Activated CD4-positive, alpha-beta T cell treated with anti-CD3 and anti-CD28 coated beads for 36 hours (primary cell): ENCODE measurements at regions of chr1 and their contacts with region 1.

Region 1: DNA sequence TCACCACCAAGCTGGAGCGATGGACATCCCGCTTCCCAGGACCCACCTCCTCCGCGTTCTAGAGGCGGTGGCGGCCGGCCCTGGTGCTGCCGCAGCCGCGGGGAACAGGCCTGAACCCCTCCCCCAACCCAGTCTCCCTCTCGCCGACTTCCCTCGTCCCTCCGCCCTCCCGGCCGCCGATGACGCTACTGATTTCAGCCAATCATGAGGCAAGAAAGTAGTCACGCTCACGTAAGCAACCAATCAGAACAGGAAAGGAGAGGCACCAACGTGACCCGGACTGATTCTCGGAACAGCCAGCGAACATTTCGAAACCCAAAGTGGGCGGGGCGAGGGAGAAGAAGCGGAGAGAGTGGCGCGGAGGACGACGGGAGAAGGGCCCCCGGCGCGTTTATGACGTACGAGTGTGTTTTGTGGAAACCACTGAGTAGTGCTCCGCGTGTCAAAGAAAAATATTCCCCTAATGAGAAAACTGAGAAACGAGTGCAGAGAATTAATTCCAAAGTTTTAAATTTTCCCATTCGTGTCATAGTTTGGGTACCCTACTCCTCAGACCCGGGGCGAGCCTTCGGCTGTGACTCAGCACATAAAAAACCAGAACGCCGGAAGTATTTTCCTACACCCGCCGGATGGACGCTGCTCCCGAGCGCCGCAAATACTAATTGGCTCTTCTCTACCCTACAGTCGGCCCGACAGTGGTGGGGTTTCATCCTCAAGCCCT is at the start of gene NRDC:
- DNase-seq: peak; percentile 100
- ATAC-seq: peak; percentile 95
- H3K4me3 Mint-ChIP-seq: no peak within 1 kb of the TSS
- H3K27ac Mint-ChIP-seq: no peak within 1 kb of the TSS
- H3K4me1 Mint-ChIP-seq: peaks cover 27% of the 10 kb centered on the region
- H3K27me3 Mint-ChIP-seq: peaks cover 12% of the 10 kb centered on the region
- total RNA-seq, gene NRDC: 149 to 186 TPM

Region 2: DNA sequence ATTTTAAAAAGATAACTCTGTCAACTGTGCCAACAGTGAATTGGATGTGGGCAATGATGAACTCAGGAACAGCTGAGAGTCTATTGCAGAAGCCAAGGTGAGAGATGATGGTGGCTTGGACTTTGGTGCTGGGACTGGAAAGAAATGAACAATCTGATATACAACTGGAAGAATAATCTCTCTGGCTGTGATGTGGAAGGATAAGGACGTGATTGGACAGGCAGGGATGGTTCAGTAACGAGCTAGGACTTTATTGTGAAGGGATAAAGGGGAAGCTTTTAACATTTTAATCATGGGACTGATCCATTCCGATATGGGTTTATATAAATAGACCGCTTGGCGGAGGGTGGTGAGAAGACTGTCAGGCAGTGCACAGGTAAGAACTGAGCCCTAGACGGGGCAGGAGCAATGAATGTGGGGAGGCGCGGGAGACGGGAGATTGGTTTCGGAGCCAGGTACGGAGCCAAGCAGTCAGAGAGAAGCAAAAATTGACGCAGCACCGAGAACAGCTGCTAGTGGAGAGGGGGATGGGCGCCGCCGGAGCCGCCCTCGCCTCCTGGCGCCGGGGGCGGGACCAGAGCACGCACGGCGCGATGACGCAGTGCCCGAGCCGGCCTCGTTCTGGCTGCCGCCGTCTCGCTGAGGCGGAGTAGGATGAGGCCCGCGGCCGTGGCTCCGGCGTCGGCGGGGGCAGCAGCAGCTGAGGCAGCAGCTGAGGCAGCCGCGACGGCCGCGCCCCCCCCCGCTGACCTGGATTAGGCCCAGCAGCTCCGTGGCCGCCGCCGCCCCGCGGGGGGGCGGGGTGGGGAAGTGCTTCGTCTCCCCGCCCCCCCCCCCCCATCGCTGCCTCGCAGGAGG is 642.9 kb before region 1 on chr1 and contains the start of gene RNF11:
- CTCF ChIA-PET with region 1: no interaction called
- POLR2A ChIA-PET with region 1: no interaction called
- intact Hi-C with region 1: loop called in 1 of 2 experiments (anchors 1 kb)
- DNase-seq: peak; percentile 97
- ATAC-seq: peak; percentile 93
- H3K4me3 Mint-ChIP-seq: peak within 1 kb of the TSS; percentile 79
- H3K27ac Mint-ChIP-seq: peak within 1 kb of the TSS; percentile 90
- H3K4me1 Mint-ChIP-seq: peaks cover 29% of the 10 kb centered on the region
- H3K27me3 Mint-ChIP-seq: no peaks in the 10 kb centered on the region
- total RNA-seq, gene RNF11: 20.6 to 26.0 TPM

Region 3: GRCh38 chr1:51519048-51519864 is 359.5 kb before region 1 on chr1 and contains the start of gene EPS15:
- CTCF ChIA-PET with region 1: no interaction called
- POLR2A ChIA-PET with region 1: no interaction called
- intact Hi-C with region 1: loop called (anchors 1 to 5 kb)
- DNase-seq: peak; percentile 95
- ATAC-seq: peak; percentile 76
- H3K4me3 Mint-ChIP-seq: peak within 1 kb of the TSS; percentile 100
- H3K27ac Mint-ChIP-seq: peak within 1 kb of the TSS; percentile 93
- H3K4me1 Mint-ChIP-seq: peaks cover 48% of the 10 kb centered on the region
- H3K27me3 Mint-ChIP-seq: no peaks in the 10 kb centered on the region
- total RNA-seq, gene EPS15: 59.6 to 61.6 TPM

Region 4: DNA sequence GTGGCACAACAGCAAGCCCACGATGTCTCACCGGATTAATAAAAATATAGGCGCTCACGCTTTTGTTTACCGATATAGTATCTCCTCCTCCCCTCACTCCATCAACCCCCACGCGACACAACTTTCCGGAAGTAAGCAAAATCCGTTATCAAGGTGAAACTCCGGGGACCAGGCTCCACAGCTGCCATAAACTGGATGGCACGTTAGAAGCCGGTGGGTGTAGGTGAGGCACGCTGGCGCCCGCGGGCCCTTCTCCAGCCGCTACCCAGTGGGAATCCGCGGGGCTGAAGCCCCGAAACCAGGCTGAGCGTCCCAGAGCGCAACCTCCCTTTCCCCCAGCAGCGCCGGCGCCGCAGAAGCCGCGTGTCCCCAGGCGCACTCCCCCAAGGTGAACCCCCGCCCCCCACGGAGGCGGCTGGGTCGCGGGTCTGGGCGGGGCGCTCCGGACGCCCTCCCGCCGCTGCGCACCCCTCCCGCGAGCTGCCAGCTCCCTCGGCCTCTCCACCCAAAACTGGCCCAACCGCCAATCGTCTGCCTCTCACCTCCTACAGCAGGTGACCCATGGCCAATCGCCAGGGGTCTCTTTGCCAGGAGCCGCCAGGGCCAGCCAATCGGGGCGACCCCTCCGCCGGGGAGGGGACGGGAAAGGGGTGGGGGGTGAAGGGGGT is 149.5 kb before region 1 on chr1:
- CTCF ChIA-PET with region 1: no interaction called
- POLR2A ChIA-PET with region 1: no interaction called
- intact Hi-C with region 1: loop called (anchors 1 to 2 kb)
- DNase-seq: peak; percentile 97
- ATAC-seq: peak; percentile 97
- H3K4me3 Mint-ChIP-seq: peak overlapping the region; percentile 84
- H3K27ac Mint-ChIP-seq: peak overlapping the region; percentile 83
- H3K4me1 Mint-ChIP-seq: peaks cover 40% of the 10 kb centered on the region
- H3K27me3 Mint-ChIP-seq: no peaks in the 10 kb centered on the region

Region 5: DNA sequence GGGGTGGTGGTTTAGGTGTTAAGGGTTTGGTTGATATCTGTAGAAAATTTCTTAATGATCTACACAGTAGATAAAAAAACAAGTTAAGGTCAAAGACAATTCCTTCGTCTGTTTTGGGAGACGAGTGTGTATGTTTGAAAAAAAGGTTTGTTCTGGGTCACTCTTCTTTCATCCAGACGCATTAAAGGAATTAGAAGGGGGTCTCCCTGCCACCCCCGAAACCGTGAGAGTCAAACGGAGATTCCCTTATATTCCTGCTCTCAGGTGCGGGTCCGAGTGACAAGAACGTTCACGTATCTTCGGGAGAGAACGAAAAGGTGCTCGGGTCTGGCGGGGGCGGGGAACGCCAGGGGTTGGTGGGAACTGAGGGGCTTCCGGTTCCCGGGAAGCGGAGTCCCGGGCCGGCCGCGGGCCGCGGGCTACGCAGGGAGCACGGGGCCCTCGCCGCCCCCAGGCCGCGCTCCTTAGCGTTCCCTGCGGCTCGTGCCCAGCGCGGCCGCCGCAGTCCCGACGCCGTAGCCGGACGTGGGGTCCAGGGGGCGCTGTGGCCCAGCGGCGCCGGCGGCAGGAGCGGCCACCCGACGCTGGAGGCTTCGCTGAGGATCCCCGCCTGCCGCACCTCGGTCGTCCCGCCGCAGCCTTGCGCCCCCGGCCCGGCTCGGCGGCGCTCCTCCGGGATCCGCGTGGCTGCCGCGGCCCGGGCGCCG is 262.9 kb after region 1 on chr1 and contains the start of gene ZFYVE9:
- CTCF ChIA-PET with region 1: no interaction called
- POLR2A ChIA-PET with region 1: no interaction called
- intact Hi-C with region 1: loop called in 1 of 2 experiments (anchors 1 kb)
- DNase-seq: peak; percentile 83
- ATAC-seq: peak; percentile 62
- H3K4me3 Mint-ChIP-seq: peak within 1 kb of the TSS; percentile 80
- H3K27ac Mint-ChIP-seq: peak within 1 kb of the TSS; percentile 84
- H3K4me1 Mint-ChIP-seq: peaks cover 43% of the 10 kb centered on the region
- H3K27me3 Mint-ChIP-seq: peaks cover 9% of the 10 kb centered on the region
- total RNA-seq, gene ZFYVE9: 4.3 to 4.7 TPM